Activated CD4-positive, alpha-beta T cell treated with anti-CD3 and anti-CD28 coated beads for 36 hours (primary cell): ENCODE measurements at regions of chr1 and their contacts with region 1.

Region 1: DNA sequence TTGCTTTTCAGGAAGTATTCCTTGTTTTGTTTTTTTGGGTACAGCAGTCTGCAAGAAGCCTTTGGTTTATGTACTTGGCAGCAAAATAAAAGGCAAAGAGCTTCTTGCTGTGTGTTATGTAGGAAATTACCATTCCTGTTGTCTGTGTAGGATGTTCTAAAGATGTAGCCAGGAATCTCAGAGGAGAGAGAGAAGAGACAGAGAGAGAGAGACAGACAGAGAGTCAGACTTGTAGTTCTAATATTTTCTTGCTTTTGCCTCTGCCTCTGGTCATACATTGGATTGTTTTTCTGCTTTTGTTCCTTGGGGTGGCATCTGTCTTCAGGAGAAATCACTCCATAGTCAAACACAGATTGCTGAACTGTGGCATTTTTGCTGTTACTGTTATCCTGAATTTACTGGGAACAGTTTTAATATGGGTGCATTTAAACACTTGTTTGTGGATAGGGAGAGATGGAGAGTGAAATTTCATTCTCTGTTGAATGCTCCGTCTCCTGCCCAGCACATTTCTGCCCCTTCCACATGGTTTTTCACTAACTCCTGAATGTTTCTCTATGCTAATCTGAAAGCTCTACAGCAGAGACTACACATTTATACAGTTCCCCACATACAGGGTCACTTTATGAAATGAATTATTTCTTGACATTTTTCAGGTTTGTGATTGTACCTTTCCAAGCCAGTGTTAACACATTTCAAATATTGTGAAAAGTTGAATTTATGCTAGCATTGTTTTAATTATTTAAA is 49.8 kb downstream of the POU2F1 start:
- DNase-seq: no peak
- ATAC-seq: no peak
- H3K4me3 Mint-ChIP-seq: no peak overlapping the region
- H3K27ac Mint-ChIP-seq: no peak overlapping the region
- H3K4me1 Mint-ChIP-seq: peaks cover 41% of the 10 kb centered on the region
- H3K27me3 Mint-ChIP-seq: no peaks in the 10 kb centered on the region

Region 2: DNA sequence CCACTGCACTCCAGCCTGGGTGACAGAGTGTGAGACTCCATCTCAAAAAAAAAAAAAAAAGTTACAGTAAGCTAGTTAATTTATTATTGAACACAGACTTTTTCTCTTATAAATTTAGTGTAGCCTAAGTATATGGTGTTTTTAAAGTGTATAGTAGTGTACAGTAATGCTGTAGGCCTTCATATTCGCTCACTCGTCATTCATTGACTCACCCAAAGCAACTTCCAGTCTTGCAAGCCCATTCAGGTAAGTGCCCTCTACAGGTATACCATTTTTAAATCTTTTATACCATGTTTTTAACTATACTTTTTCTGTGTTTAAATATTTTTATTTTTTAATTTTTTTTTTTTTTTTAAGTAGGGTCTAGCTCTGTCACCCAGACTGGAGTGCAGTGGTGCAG is 37.7 kb before region 1 on chr1:
- CTCF ChIA-PET with region 1: interaction called, 12 read pairs
- POLR2A ChIA-PET with region 1: no interaction called
- intact Hi-C with region 1: no loop called
- DNase-seq: no peak
- ATAC-seq: no peak
- H3K4me3 Mint-ChIP-seq: no peak overlapping the region
- H3K27ac Mint-ChIP-seq: no peak overlapping the region
- H3K4me1 Mint-ChIP-seq: peaks cover 37% of the 10 kb centered on the region
- H3K27me3 Mint-ChIP-seq: no peaks in the 10 kb centered on the region

Region 3: GRCh38 chr1:167291539-167292185 is 21.1 kb after region 1 on chr1:
- CTCF ChIA-PET with region 1: interaction called, 19 read pairs
- POLR2A ChIA-PET with region 1: no interaction called
- intact Hi-C with region 1: no loop called
- DNase-seq: no peak
- ATAC-seq: no peak
- H3K4me3 Mint-ChIP-seq: no peak overlapping the region
- H3K27ac Mint-ChIP-seq: no peak overlapping the region
- H3K4me1 Mint-ChIP-seq: peaks cover 17% of the 10 kb centered on the region
- H3K27me3 Mint-ChIP-seq: no peaks in the 10 kb centered on the region

Region 4: DNA sequence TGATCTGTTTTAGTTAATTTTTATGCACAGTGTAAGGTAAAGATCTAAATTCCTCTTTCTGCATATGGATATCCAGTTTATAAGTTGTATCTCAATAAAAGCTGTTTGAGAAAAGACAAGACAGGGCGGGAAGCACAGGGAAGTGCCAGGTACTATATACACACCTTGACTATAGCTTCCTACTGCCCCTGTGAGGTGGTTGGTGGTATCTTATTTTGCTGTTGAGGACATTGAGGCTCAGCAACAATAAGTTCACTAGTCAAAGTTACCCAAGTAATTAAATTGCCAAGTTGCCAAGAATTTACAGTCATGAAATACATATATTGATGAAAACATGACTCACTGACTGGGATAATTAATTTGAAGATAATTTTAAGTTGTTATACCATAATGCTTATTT is 138.7 kb after region 1 on chr1:
- CTCF ChIA-PET with region 1: interaction called, 5 read pairs
- POLR2A ChIA-PET with region 1: no interaction called
- intact Hi-C with region 1: loop called (anchors 1 to 10 kb)
- DNase-seq: no peak
- ATAC-seq: no peak
- H3K4me3 Mint-ChIP-seq: no peak overlapping the region
- H3K27ac Mint-ChIP-seq: no peak overlapping the region
- H3K4me1 Mint-ChIP-seq: peaks cover 19% of the 10 kb centered on the region
- H3K27me3 Mint-ChIP-seq: no peaks in the 10 kb centered on the region

Region 5: DNA sequence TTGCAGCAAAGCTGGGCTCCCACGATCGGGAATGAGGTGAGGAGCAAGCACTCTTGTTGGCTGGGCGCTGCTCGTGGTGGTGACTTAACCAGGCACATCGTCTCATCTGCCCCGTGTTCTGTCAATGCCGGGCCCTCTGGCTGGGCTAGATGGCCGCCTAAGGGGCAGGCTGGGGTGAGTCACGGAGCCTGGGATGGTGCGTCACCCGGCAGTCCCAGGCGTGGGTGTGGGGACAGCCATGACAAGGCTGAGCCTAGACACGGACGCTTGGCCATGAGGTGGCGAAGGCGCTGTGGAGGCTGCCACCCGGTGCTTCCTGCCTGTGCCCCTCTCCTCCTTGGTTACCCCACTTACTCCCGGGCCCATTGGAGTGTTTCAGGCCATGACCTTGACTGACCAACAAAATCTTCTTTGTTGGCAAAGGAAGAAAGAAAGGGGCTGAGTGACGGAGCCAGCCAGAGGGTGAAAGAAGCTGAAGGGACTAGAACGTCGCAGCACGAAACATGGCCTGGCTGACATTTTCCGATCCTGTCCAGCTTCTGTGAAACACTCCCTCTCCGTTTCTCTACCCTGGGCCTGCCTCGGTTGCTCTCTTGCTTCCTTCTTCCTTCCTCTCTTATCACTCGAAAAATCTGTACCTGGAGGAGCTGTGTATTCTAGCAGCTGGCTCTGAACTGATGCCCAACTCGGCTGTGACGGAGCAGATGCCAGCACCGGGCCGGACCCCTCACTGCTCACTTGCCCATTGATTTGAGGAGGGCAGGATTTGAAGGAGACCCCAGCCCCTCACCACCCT is 247.2 kb after region 1 on chr1:
- CTCF ChIA-PET with region 1: interaction called, 3 read pairs
- POLR2A ChIA-PET with region 1: interaction called, 3 read pairs
- intact Hi-C with region 1: loop called in 1 of 2 experiments (anchors 5 kb)
- DNase-seq: peak; percentile 97
- ATAC-seq: peak; percentile 88
- H3K4me3 Mint-ChIP-seq: peak overlapping the region; percentile 90
- H3K27ac Mint-ChIP-seq: peak overlapping the region; percentile 99
- H3K4me1 Mint-ChIP-seq: peaks cover 43% of the 10 kb centered on the region
- H3K27me3 Mint-ChIP-seq: no peaks in the 10 kb centered on the region